Breast epithelium (tissue), 4 donors: ENCODE measurements at regions of chr17 and their contacts with region 1.

Region 1: DNA sequence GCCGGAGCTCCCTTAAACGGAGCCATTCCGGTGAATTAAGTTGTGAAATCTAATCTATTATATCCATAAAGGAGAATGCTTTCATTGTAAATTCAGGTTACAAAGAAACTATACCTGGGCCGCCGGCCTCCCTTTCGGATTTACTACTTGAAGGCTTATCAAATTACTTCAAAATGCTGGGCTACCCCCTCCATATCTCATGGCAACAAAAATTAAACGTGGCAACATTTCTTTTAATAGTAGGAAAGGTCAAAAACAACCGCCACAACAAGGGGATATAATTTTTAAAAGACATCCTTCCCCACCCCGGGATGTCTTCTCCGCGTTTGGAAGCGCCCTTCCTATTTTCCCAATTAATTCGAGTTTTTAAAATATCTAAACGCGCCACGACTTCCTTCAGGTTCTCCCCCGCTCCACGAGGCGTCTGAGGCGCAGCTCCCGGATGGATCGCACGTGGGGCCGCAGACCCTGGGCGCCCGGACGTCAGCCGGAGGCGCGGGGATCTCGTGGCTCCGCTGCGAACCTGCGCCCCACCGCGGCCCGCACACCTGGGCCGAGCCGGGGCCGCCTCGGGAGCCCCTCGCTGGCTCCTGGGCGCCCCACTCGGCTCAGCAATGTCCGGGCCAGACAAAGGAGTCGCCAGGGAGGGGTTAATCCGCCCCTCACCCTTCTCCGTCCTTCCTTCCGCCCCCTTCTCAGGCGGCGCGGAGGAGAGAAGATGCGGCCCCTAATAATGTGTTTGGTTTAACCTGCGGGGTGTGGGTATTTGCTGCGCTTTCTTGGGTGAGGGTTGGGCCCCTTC is 47.4 kb upstream of the SLC38A10 start:
- DNase-seq: no peak
- H3K4me3 ChIP-seq: peak overlapping the region; percentile 69 to 94 (median 81)
- H3K27ac ChIP-seq: peak overlapping the region; percentile 96 to 97
- H3K4me1 ChIP-seq: peaks cover 17 to 18% of the 10 kb centered on the region in 2 donors
- H3K27me3 ChIP-seq: no peaks in the 10 kb centered on the region
- CTCF ChIP-seq: no peak
- POLR2A ChIP-seq: no peak

Region 2: GRCh38 chr17:81371910-81372760 is 29.7 kb after region 1 on chr17:
- intact Hi-C with region 1: loop called (anchors 1 kb)
- DNase-seq: no peak
- H3K4me3 ChIP-seq: no peak overlapping the region
- H3K27ac ChIP-seq: peak overlapping the region; percentile 34 to 83
- H3K4me1 ChIP-seq: no peaks in the 10 kb centered on the region
- H3K27me3 ChIP-seq: peaks cover 0 to 10% of the 10 kb centered on the region in 2 donors
- CTCF ChIP-seq: no peak
- POLR2A ChIP-seq: no peak

Region 3: GRCh38 chr17:81393684-81394376 is 51.4 kb after region 1 on chr17:
- intact Hi-C with region 1: loop called (anchors 2 kb)
- DNase-seq: peak; percentile 100
- H3K4me3 ChIP-seq: peak overlapping the region; percentile 60 to 90 (median 82)
- H3K27ac ChIP-seq: peak overlapping the region; percentile 96
- H3K4me1 ChIP-seq: peaks cover 7% of the 10 kb centered on the region in 2 donors
- H3K27me3 ChIP-seq: no peaks in the 10 kb centered on the region
- CTCF ChIP-seq: peak in 2 of 3 donors; percentile 4 to 11
- POLR2A ChIP-seq: peak; percentile 76

Region 4: DNA sequence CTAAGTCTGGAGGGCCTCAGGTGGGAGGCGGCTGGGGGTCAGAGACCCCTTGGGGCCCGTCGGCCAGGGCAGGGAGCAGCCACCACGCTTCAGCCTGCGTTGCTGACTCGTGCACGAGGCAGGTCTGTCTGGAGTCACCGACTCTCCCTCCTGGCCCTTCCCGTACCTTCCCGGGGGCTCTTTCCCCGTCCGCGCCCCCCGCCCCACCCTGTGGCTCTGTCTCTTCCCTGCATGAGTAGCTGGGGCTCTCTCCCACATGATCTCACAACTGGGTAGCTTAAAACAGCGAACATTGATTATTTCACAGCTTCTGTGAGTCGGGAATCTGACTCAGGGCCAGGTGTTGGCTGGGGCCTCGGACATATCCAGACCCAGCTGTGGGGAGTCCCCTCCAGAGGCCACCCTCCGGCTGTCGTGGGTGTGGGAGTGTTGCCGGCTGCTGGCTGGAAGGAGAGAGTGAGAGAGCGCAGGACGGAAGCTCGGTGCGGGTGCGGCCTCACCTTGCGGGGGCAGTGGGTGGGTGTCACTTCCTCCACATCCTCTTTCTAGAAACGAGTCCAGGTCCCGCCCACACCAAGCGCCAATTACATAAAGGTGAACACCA is 70.1 kb after region 1 on chr17:
- intact Hi-C with region 1: no loop called
- DNase-seq: no peak
- H3K4me3 ChIP-seq: peak overlapping the region in 1 of 3 donors; percentile 45
- H3K27ac ChIP-seq: peak overlapping the region in 1 of 2 donors; percentile 51
- H3K4me1 ChIP-seq: peaks cover 0 to 8% of the 10 kb centered on the region in 2 donors
- H3K27me3 ChIP-seq: no peaks in the 10 kb centered on the region
- CTCF ChIP-seq: no peak
- POLR2A ChIP-seq: no peak

Region 5: DNA sequence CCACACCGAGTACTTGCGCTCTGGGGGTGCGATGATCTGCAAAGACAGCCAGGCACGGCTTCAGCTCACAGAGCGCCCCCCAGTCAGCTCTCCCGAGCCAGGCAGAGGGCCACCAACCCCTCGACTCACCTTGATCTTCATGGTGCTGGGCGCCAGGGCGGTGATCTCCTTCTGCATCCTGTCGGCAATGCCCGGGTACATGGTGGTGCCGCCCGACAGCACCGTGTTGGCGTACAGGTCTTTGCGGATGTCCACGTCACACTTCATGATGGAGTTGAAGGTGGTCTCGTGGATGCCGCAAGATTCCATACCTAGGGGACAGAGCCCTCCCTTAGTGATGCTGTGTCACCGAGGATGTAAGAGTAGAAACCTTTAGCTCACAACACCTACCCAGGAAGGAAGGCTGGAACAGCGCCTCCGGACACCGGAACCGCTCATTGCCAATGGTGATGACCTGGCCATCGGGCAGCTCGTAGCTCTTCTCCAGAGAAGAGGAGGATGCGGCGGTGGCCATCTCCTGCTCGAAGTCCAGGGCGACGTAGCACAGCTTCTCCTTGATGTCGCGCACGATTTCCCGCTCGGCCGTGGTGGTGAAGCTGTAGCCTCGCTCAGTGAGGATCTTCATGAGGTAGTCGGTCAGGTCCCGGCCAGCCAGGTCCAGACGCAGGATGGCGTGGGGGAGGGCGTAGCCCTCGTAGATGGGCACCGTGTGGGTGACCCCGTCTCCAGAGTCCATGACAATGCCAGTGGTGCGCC is 168.5 kb after region 1 on chr17:
- intact Hi-C with region 1: loop called (anchors 1 kb)
- DNase-seq: no peak
- H3K4me3 ChIP-seq: peak overlapping the region; percentile 79 to 98 (median 92)
- H3K27ac ChIP-seq: peak overlapping the region; percentile 98 to 99
- H3K4me1 ChIP-seq: peaks cover 0 to 5% of the 10 kb centered on the region in 2 donors
- H3K27me3 ChIP-seq: no peaks in the 10 kb centered on the region
- CTCF ChIP-seq: no peak
- POLR2A ChIP-seq: no peak